ENCODE measurements at regions of chr11 and their contacts with region 1.

Region 1: GRCh38 chr11:45885274-45885920 is at the start of gene MAPK8IP1:
- DNase-seq: peak; percentile 40
- H3K4me3 Mint-ChIP-seq: peak within 1 kb of the TSS; percentile 56
- H3K27ac Mint-ChIP-seq: no peak within 1 kb of the TSS
- H3K4me1 Mint-ChIP-seq: peaks cover 6% of the 10 kb centered on the region
- H3K27me3 Mint-ChIP-seq: peaks cover under 1% of the 10 kb centered on the region
- total RNA-seq, gene MAPK8IP1: 0.22 to 0.57 TPM

Region 2: DNA sequence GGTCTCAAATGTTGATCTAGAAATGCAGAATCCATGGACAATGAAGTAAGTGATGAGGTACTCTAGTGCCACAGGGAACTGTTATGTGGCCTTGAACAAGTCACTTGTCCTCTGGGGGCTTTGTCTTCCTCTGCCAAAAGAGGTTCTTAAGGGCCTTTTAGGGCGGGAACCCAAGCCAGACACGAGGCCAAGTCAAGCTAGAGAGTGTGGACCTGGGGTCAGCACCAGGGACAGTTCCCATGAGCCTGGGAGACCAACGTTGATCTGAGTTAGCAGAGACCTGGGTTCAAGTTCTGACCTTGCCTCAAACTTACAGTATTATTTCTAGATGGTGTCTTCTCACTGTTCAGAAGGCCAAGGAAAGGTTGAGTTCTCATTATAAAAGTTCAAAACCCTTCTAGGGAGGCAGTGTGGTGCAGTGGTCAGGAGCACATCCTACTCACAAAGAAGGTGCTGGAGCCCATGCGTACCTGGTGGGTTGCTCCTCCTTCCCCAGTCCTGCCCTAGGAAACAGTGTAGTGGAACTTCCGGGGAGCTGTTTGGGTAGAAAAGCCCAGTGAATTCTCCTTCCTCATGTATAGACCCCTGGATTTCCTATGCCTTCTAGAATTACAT is 341.5 kb before region 1 on chr11:
- CTCF ChIA-PET with region 1: no interaction called
- intact Hi-C with region 1: no loop called
- DNase-seq: peak; percentile 35
- H3K4me3 Mint-ChIP-seq: no peak overlapping the region
- H3K27ac Mint-ChIP-seq: no peak overlapping the region
- H3K4me1 Mint-ChIP-seq: no peaks in the 10 kb centered on the region
- H3K27me3 Mint-ChIP-seq: peaks cover 11% of the 10 kb centered on the region

Region 3: DNA sequence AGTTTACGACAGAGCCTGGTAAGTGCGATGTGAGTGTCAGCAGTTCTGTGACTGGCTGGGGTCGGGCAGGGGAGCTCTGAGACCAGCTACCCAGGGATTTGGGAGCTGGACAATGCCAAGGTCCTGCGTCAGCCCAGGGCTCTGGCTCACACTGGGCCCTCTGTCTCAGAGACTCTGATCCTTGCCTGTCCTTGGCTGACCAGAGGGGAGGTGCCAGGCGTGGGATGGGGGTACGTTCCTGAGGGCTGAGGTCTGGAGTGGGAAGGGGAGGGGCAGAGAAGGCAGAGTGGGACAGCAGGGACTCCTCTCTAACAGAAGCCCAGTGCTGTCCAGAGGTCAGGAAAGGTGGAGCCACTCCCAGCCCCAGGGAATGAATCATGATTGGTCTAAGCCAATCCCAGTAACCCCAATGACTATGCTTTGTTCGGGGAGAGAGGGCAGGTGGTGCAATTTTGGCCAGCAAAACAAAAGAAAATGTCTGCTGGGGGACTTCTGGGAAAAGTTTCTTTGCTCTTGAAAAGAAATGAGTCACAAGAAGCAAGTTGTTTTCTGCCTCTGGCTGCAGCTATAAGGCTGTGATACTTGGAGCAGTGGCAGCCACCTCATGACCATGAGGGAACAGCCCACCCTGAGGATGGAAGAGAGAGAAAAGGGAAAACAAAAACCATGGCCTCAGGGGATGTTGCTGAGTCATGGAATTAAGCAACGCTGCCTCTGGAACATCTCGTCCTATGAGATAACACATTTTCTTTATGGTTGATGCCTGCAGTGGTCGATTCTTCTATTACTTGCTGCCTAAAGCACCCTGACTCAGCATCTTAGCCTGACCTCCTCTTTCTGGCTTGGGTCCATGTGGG is 328.3 kb before region 1 on chr11:
- CTCF ChIA-PET with region 1: no interaction called
- intact Hi-C with region 1: no loop called
- DNase-seq: no peak
- H3K4me3 Mint-ChIP-seq: no peak overlapping the region
- H3K27ac Mint-ChIP-seq: no peak overlapping the region
- H3K4me1 Mint-ChIP-seq: no peaks in the 10 kb centered on the region
- H3K27me3 Mint-ChIP-seq: peaks cover 8% of the 10 kb centered on the region

Region 4: GRCh38 chr11:45899448-45900173 is 14.2 kb after region 1 on chr11:
- CTCF ChIA-PET with region 1: no interaction called
- intact Hi-C with region 1: loop called (anchors 1 kb)
- DNase-seq: peak; percentile 66
- H3K4me3 Mint-ChIP-seq: peak overlapping the region; percentile 39
- H3K27ac Mint-ChIP-seq: no peak overlapping the region
- H3K4me1 Mint-ChIP-seq: peaks cover 2% of the 10 kb centered on the region
- H3K27me3 Mint-ChIP-seq: peaks cover 34% of the 10 kb centered on the region

Region 5: GRCh38 chr11:45917623-45918330 is 32.4 kb after region 1 on chr11 and contains the start of gene PEX16:
- CTCF ChIA-PET with region 1: no interaction called
- intact Hi-C with region 1: loop called (anchors 1 kb)
- DNase-seq: peak; percentile 96
- H3K4me3 Mint-ChIP-seq: peak within 1 kb of the TSS; percentile 88
- H3K27ac Mint-ChIP-seq: peak within 1 kb of the TSS; percentile 96
- H3K4me1 Mint-ChIP-seq: peaks cover 24% of the 10 kb centered on the region
- H3K27me3 Mint-ChIP-seq: peaks cover 3% of the 10 kb centered on the region
- total RNA-seq, gene PEX16: 28.6 to 32.5 TPM